PC-9 (cell line): ENCODE measurements at regions of chr6 and their contacts with region 1.

Region 1: GRCh38 chr6:73309769-73310502 is 44.1 kb downstream of the DPPA5 start:
- DNase-seq: peak; percentile 57 to 76
- H3K4me3 ChIP-seq: peak overlapping the region; percentile 89
- H3K27ac ChIP-seq: peak overlapping the region; percentile 83
- H3K4me1 ChIP-seq: peaks cover 16% of the 10 kb centered on the region
- H3K27me3 ChIP-seq: no peaks in the 10 kb centered on the region
- CTCF ChIP-seq: peak; percentile 61

Region 2: GRCh38 chr6:72850469-72850868 is 459.5 kb before region 1 on chr6:
- CTCF ChIA-PET with region 1: interaction called, 19 read pairs
- POLR2A ChIA-PET with region 1: no interaction called
- intact Hi-C with region 1: no loop called
- DNase-seq: no peak
- H3K4me3 ChIP-seq: no peak overlapping the region
- H3K27ac ChIP-seq: no peak overlapping the region
- H3K4me1 ChIP-seq: no peaks in the 10 kb centered on the region
- H3K27me3 ChIP-seq: no peaks in the 10 kb centered on the region
- CTCF ChIP-seq: no peak

Region 3: GRCh38 chr6:72968704-72969103 is 341.2 kb before region 1 on chr6:
- CTCF ChIA-PET with region 1: no interaction called
- POLR2A ChIA-PET with region 1: no interaction called
- intact Hi-C with region 1: no loop called
- DNase-seq: peak in 1 of 2 experiments; percentile 90
- H3K4me3 ChIP-seq: no peak overlapping the region
- H3K27ac ChIP-seq: peak overlapping the region; percentile 71
- H3K4me1 ChIP-seq: peaks cover 34% of the 10 kb centered on the region
- H3K27me3 ChIP-seq: no peaks in the 10 kb centered on the region
- CTCF ChIP-seq: no peak